Dorsolateral prefrontal cortex (tissue), 120 donors: ENCODE measurements at regions of chr2 and their contacts with region 1.

Region 1: DNA sequence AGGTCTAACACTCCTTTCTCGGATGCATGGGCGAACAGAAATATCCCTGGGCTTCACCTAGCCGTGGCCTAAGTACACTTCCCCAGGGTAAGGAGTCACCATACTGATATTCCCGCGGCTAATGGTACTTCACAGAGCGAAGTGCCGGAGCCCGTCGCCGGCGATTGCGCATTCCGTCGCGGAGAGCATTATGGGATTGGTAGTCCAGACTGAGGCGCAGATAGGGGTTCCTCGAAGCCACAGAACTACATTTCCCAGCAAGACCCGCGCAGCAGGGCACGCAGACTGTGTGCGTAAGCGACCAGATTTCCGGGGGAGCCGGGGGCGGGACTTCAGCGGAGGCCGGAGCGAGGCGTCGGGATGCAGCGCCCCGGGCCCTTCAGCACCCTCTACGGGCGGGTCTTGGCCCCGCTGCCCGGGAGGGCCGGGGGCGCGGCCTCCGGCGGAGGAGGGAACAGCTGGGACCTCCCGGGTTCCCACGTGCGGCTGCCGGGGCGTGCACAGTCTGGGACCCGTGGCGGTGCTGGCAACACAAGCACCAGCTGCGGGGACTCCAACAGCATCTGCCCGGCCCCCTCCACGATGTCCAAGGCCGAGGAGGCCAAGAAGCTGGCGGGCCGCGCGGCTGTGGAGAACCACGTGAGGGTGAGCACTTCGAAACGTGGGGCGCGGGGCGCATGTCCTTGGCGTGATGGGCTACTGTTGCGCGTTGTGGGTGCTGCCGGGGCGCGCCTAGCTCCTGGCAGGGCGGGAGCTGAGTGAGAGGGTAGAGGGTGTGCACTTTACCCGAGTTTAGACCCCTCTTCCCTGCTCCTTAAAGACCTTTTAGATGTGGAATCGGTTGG is at the start of gene RPIA:
- DNase-seq: peak; percentile 98 to 100 (median 99)
- H3K4me3 ChIP-seq: peak within 1 kb of the TSS; percentile 68 to 99 (median 92)
- H3K27ac ChIP-seq: peak within 1 kb of the TSS in 48 of 59 donors; percentile 9 to 90 (median 74)
- H3K27me3 ChIP-seq: no peaks in the 10 kb centered on the region
- CTCF ChIP-seq: peak in 55 of 56 donors; percentile 31 to 82 (median 72)
- total RNA-seq, gene RPIA: 4.3 to 10.6 (median 7.1) TPM

Region 2: DNA sequence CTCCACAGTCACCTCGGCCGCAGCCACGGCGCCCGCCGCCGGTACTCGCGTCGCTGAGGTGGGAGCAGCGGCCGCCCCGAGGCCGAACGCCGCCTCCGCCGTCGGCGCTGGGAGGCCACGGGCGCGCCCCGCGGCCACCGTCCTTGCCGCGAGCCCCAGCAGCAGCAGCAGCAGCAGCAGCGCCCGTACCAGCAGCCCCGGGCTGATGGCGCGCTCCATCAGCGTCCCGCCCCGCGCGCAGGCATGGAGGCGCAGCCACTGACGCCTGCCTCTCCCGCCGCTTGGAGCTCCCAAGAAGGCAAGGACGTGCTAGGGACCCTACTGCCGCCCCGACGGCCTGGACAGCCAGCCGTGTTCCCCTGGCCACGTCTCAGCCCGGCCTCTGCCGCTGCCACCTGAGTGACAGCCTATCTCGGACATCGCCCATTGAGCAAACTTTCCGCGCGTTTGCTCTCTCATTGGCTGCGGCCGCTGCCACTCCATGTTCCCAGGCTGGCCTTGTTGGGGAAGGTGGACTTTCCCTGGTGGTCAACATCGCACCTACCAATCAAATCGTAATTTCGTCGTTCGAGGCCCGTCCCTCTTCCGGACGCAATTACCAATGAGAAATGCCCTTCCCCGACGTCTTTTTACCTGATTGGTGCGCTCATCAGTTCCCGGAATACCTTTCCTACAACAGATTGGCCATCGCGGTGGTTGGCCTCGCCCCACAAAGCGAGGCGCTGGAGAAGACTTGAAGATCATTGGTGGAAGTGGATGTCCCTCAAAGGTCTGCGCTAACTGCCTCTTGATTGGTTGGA is 64.3 kb before region 1 on chr2 and contains the start of gene EIF2AK3:
- intact Hi-C with region 1: loop called (anchors 1 to 5 kb)
- DNase-seq: peak; percentile 98 to 100 (median 99)
- H3K4me3 ChIP-seq: peak within 1 kb of the TSS; percentile 71 to 100 (median 91)
- H3K27ac ChIP-seq: peak within 1 kb of the TSS; percentile 49 to 98 (median 92)
- H3K27me3 ChIP-seq: no peaks in the 10 kb centered on the region
- CTCF ChIP-seq: peak in 27 of 56 donors; percentile 6 to 57 (median 25)
- total RNA-seq, gene EIF2AK3: 10.0 to 25.9 (median 17.4) TPM

Region 3: DNA sequence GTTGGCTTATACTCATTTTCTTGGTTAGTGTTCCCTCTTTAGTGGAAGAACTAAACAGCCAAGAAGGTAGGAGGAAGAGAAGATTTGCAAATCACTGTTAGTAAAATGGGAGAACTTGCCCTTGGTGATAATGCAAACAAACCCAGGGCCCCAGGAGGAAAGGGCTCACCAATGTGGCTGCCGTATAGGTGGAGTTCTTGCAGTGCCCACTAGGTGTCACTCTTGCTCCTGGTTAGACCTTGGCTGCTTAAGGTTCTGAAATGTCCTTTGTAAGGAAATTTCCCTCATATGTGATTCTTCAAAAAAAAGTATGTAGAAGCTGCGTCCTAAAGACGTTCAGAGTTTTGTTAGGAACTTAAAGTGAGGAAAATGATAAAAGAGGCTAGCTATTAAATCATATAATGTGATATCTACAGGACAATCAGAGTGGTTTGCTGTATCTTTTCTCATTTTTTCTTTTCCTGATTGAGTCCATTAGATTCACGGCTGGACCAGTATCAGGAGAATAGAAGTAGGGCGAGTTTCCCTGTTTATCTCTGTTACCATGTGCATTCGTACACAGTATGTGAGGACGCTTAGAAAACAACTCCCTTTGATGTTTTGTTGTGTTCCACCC is 48.5 kb after region 1 on chr2:
- intact Hi-C with region 1: loop called in 1 of 2 experiments (anchors 5 kb)
- DNase-seq: peak in 9 of 10 donors; percentile 45 to 81 (median 72)
- H3K4me3 ChIP-seq: no peak overlapping the region
- H3K27ac ChIP-seq: no peak overlapping the region
- H3K27me3 ChIP-seq: no peaks in the 10 kb centered on the region
- CTCF ChIP-seq: peak; percentile 75 to 97 (median 92)